Common myeloid progenitor, CD34-positive (primary cell): ENCODE measurements at regions of chr14 and their contacts with region 1.

Region 1: DNA sequence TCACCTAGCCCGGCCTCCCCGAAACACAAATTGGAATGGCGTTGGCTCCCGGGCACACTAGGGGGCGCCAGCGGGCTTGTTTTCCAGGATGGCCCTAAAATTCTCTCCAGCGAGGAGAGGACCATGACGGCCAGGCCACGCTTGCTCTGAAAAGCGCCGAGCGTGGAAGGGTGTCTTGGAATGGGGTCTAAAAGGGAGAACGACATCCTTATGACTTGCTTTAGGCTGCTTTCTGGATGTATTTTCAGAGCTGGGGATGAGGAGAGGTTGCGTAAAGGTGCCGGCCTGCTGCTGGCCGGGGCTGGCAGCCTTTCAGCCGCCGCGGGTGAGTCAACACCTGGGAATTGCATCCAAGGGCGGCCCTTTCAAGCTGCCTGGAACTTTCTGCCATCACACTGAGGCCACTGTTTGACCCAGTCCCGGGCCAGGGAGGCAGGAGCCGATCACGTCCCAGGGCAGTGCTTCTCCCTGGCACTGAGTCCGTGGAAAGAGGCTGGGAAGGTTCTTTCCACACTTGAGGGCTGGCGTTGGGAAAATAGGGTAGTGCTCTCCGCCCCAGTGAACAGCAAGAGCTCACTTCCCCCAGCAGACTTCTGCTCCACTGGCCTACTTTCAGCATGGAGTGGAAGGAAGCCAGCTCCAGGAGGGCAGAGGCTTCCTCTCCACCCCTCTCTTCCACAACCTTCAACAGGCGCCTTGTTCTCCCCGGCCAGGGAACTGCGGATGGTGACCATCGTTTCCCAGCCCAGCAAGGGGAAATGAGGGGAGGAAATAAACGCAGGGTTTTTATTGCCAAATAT is 216.2 kb downstream of the TTC8 start:
- DNase-seq: peak; percentile 76 to 86 (median 84)
- H3K4me3 ChIP-seq: peak overlapping the region in 6 of 7 experiments; percentile 28 to 81 (median 66)
- H3K27ac ChIP-seq: peak overlapping the region; percentile 52 to 63
- H3K4me1 ChIP-seq: peaks cover 6 to 22% (median 11%) of the 10 kb centered on the region in 4 experiments
- H3K27me3 ChIP-seq: no peaks in the 10 kb centered on the region

Region 2: DNA sequence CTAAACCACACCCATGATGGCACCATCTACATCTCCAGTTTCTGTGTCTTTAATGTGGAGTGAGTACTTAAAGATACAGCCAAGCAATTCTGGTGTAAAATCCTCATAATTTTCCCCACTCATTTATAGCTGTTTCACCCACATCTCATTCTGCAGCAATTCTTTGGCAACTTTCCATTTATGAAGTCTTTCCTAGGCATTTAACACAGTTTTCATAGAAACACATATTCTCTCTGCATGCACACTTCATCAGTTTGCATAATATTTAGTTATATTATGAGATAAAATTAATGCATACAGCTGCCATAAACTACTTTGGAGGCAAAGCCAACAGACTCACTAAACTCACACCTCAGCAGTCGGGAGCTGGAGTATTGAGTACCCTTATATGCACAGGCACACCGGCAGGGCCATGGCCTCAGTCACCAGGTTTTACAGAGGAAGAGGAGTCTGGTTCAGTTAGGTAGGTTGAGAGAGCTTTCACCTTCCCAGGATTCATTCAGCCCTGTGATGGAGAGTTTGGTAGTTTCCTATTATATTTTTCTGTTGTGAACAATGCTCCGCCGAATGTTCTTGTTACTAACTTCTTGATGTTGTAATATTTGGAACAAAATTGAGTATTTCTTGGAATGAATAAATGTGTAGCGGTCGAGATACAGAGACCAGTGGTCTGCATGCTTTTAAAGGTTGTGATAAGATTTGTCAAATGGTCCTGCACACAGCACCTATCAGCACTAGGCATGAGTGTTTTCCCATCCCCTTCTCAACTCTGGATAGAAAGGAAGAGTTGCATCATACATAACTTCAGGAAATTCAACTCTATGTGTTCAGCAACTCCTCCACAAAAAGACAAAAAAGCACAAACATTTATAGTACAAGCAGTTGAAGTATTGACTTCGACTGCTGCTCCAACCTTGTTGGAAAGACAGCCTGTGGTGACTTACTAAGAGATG is 92.7 kb before region 1 on chr14:
- CTCF ChIA-PET with region 1: no interaction called
- POLR2A ChIA-PET with region 1: no interaction called
- DNase-seq: no peak
- H3K4me3 ChIP-seq: no peak overlapping the region
- H3K27ac ChIP-seq: no peak overlapping the region
- H3K4me1 ChIP-seq: no peaks in the 10 kb centered on the region
- H3K27me3 ChIP-seq: peaks cover 0 to 4% (median 0%) of the 10 kb centered on the region in 5 experiments

Region 3: DNA sequence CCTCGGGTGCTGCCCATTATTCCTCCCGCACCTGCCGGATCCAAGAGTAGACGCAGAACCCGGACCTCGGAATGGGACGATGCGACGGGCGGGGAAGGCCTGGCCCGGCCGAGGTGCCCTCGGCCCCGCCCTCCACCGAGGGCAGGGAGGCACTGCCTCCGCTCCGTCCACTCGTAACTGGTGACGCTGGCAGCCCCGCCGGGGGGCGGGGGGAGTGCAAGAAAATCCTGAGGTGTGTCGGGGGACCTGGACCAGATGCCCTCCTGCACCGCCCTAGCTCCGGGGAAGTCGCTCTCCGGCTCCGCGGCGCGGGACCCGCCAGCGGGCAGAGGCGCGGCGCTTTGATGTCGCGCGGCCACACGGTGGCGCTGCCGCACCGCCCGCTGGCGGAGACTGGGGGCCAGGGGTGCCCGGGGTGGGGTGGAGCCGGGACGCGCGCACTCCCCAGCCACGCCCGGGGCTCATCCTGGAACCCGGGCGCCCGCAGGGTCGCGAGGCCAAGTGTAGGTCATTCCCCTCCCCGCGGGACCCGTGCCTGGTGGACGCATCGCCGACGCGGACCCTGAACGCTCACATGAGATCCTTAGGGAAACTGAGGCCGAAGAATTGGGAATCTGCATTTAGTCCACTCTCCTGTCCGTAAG is 13.4 kb before region 1 on chr14:
- CTCF ChIA-PET with region 1: interaction called, 25 read pairs
- POLR2A ChIA-PET with region 1: no interaction called
- DNase-seq: peak; percentile 43 to 74 (median 72)
- H3K4me3 ChIP-seq: peak overlapping the region; percentile 52 to 77 (median 70)
- H3K27ac ChIP-seq: no peak overlapping the region
- H3K4me1 ChIP-seq: peaks cover 0 to 17% (median 12%) of the 10 kb centered on the region in 4 experiments
- H3K27me3 ChIP-seq: peaks cover 4 to 38% (median 9%) of the 10 kb centered on the region in 5 experiments

Region 4: GRCh38 chr14:89165189-89166181 is 124.8 kb after region 1 on chr14:
- CTCF ChIA-PET with region 1: interaction called, 21 read pairs
- POLR2A ChIA-PET with region 1: no interaction called
- DNase-seq: peak; percentile 99 to 100 (median 100)
- H3K4me3 ChIP-seq: peak overlapping the region in 6 of 7 experiments; percentile 46 to 76 (median 58)
- H3K27ac ChIP-seq: peak overlapping the region; percentile 89 to 91
- H3K4me1 ChIP-seq: peaks cover 22 to 55% (median 50%) of the 10 kb centered on the region in 4 experiments
- H3K27me3 ChIP-seq: no peaks in the 10 kb centered on the region